ENCODE measurements at regions of chr2 and their contacts with region 1.

Region 1: GRCh38 chr2:43537137-43537536 is 58.7 kb downstream of the THADA start:
- DNase-seq: no peak
- H3K4me3 ChIP-seq: no peak overlapping the region
- H3K27ac ChIP-seq: peak overlapping the region; percentile 82
- H3K4me1 ChIP-seq: peaks cover 0 to 50% (median 24%) of the 10 kb centered on the region in 4 donors
- H3K27me3 ChIP-seq: no peaks in the 10 kb centered on the region
- CTCF ChIP-seq: no peak

Region 2: DNA sequence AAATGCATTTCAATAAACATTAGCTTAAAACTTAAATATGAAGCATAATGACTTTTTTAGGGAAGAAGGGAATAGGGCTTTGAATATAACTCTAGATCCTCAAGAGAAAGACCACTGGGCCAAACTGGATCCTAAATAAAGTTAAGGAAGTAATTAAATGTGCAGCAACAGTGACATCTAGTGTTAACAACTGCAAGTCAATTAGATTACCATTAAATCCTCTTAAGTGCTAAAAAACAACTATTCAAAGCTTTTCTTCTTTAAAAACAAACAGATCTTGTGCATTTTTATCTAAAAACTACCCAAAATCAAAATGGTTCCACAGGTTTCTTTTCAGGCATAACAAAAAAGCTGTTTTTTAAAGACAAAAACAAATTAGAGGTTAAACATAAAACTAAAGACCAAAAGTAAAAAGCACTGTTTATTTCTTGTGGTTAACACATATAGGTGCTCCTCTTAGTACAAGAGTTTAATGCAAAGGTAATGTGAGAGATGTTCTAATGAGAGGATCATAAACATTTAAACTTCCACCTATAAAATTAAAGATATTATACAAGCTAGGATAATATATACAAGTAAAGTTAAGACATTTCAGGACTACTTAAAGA is 52.7 kb before region 1 on chr2:
- intact Hi-C with region 1: loop called (anchors 5 kb)
- DNase-seq: no peak
- H3K4me3 ChIP-seq: no peak overlapping the region
- H3K27ac ChIP-seq: peak overlapping the region; percentile 65 to 80
- H3K4me1 ChIP-seq: peaks cover 0 to 70% (median 30%) of the 10 kb centered on the region in 4 donors
- H3K27me3 ChIP-seq: no peaks in the 10 kb centered on the region
- CTCF ChIP-seq: peak; percentile 68 to 84

Measured in tibial artery (tissue), 4 donors.